ENCODE measurements at regions of chr2 and their contacts with region 1.

Region 1: DNA sequence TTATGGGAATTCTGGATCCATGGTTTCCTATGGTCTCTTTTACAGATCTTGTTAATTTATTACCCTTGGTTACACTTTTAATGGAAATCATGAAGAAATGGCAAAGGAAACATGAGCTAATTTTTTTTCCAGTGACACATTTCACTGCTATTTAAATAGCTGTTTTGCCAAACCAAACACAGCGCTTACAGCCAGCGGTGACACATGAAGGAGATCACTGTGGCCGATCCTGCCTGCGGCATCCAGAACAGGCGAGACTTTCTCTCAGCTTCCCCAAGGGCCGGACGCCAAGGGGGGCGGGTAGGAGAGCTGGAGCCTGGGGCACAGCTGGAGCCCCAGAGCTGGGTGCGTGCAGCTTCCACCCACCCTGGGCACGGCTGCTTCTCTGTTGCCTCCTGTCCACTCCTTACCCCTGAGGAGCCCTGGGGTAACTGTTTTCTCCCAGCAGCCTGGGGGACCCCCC is 81.4 kb upstream of the PKDCC start:
- DNase-seq: no peak
- H3K4me3 ChIP-seq: no peak overlapping the region
- H3K27ac ChIP-seq: peak overlapping the region; percentile 70 to 83 (median 78)
- H3K4me1 ChIP-seq: peaks cover 35 to 62% (median 60%) of the 10 kb centered on the region in 4 donors
- H3K27me3 ChIP-seq: no peaks in the 10 kb centered on the region
- CTCF ChIP-seq: no peak
- EP300 ChIP-seq: no peak
- POLR2A ChIP-seq: no peak

Region 2: GRCh38 chr2:42028571-42029148 is 62.2 kb after region 1 on chr2:
- intact Hi-C with region 1: loop called (anchors 5 kb)
- DNase-seq: no peak
- H3K4me3 ChIP-seq: no peak overlapping the region
- H3K27ac ChIP-seq: no peak overlapping the region
- H3K4me1 ChIP-seq: peaks cover 14 to 15% (median 14%) of the 10 kb centered on the region in 4 donors
- H3K27me3 ChIP-seq: no peaks in the 10 kb centered on the region
- CTCF ChIP-seq: no peak
- EP300 ChIP-seq: no peak
- POLR2A ChIP-seq: no peak

Region 3: DNA sequence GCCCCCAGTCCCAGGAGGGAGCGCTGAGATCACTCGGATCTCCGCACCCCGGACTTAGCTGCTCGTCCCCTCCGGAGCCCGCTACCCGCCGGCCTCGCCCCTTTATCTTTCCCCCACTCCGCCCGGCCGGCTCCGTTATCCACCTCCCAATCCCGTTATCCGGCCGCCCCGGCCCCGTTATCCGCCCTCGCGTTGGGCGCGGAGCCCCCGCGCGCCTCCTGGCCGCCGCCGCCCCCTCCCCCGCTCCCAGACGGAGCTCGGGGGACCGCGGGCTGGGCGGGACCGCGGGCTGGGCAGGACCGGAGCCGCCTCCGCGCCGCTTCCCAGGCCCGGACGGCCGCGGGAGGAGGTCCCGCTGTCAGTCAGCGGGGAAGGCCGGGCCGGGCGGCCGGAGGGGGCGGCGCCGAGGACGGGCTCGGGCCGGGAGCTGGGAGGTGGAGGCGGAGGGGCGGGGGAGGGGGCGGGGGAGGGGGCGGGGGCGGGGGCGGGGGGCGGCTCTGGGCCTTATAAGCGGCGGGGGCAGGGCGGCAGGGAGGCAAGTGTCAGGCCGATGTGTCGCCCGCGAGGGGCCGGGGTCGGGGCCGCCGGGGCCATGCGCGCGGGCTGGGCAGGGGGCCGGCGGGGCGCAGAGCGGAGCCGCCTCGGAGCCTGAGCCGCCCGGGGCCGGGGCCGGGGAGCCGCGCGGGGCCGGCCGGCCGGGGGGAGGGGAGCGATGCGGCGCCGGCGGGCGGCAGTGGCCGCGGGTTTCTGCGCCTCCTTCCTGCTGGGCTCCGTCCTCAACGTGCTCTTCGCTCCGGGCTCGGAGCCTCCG is 81.2 kb after region 1 on chr2 and contains the start of gene PKDCC:
- intact Hi-C with region 1: loop called (anchors 5 kb)
- DNase-seq: no peak
- H3K4me3 ChIP-seq: peak within 1 kb of the TSS; percentile 77 to 95 (median 86)
- H3K27ac ChIP-seq: peak within 1 kb of the TSS; percentile 91 to 97 (median 94)
- H3K4me1 ChIP-seq: peaks cover 29 to 55% (median 46%) of the 10 kb centered on the region in 4 donors
- H3K27me3 ChIP-seq: peaks cover 0 to 4% (median 0%) of the 10 kb centered on the region in 4 donors
- CTCF ChIP-seq: no peak
- EP300 ChIP-seq: no peak
- POLR2A ChIP-seq: peak; percentile 63
- total RNA-seq, gene PKDCC: 102 to 290 (median 208) TPM